ENCODE measurements at regions of chr1 and their contacts with region 1.

Region 1: GRCh38 chr1:223712194-223712849 is at the start of gene CAPN2:
- DNase-seq: peak; percentile 78
- H3K4me3 ChIP-seq: peak within 1 kb of the TSS; percentile 77 to 81
- H3K27ac ChIP-seq: peak within 1 kb of the TSS; percentile 91 to 92
- H3K4me1 ChIP-seq: peaks cover 11% of the 10 kb centered on the region
- H3K27me3 ChIP-seq: no peaks in the 10 kb centered on the region
- CTCF ChIP-seq: peak; percentile 70 to 94 (median 81)
- POLR2A ChIP-seq: peak; percentile 73
- total RNA-seq, gene CAPN2: 88.5 to 156 TPM

Region 2: GRCh38 chr1:223748773-223749733 is 36.7 kb after region 1 on chr1:
- intact Hi-C with region 1: loop called (anchors 1 kb)
- DNase-seq: peak; percentile 57
- H3K4me3 ChIP-seq: peak overlapping the region; percentile 31 to 36
- H3K27ac ChIP-seq: peak overlapping the region; percentile 33 to 59
- H3K4me1 ChIP-seq: peaks cover 4% of the 10 kb centered on the region
- H3K27me3 ChIP-seq: no peaks in the 10 kb centered on the region
- CTCF ChIP-seq: peak; percentile 93 to 96 (median 95)
- POLR2A ChIP-seq: no peak

Region 3: DNA sequence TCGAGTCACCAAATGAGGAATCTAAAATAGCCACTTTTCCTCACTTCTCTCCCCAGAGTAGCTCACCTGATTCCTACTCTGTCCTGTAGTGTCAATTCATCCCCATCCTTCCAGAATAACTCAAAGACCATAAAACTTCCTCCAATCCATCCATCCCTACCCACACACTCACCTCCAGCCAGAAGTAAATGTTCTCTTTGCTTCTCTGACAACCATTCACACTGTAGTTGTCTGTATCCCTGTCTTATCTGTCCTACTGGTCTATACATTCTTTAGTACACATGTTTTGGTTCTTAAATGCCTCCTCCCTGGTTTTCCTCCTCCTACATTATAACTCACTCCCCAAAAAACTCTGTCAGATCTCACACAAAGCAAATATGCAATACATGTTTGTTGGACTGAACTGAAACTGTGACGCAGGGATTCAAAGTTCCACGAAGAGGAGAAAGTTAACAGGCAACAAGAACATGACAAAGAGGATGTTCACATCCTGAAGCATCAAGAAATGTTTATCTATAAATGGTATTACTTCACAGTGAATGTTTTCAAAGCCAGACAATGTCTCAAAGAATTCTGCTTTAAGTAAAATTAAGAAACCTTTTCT is 122.4 kb after region 1 on chr1:
- intact Hi-C with region 1: loop called (anchors 5 kb)
- DNase-seq: no peak
- H3K4me3 ChIP-seq: no peak overlapping the region
- H3K27ac ChIP-seq: peak overlapping the region; percentile 24 to 40
- H3K4me1 ChIP-seq: no peaks in the 10 kb centered on the region
- H3K27me3 ChIP-seq: no peaks in the 10 kb centered on the region
- CTCF ChIP-seq: no peak
- POLR2A ChIP-seq: no peak